Prostate gland (tissue), 2 donors: ENCODE measurements at regions of chr19 and their contacts with region 1.

Region 1: DNA sequence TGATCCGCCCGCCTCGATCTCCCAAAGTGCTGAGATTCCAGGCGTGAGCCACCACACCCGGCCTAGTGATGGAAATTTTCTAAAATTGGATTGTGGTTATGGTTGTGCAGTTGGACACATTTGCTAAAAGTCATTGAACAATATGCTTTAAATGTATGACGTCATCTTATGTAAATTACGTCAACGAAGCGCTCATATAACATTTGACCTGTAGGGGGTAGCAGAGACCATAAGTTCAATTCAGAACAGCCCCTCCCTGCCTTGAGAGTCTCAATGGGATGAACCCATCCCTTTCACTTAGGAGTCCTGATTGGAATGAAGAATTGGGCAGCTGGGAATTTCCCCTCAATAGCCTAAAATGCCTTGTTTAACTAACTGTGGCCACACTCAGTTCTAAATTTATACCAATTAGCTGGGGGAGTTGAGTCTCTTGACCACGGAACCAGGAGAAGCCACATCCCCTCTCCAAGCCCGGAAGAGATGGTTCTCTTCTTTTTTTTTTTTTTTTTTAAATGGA is 15.3 kb upstream of the TLE6 start:
- DNase-seq: peak; percentile 80
- H3K4me3 ChIP-seq: no peak overlapping the region
- H3K27ac ChIP-seq: no peak overlapping the region
- H3K4me1 ChIP-seq: no peaks in the 10 kb centered on the region
- H3K27me3 ChIP-seq: no peaks in the 10 kb centered on the region
- CTCF ChIP-seq: peak; percentile 59 to 98 (median 94)
- POLR2A ChIP-seq: no peak

Region 2: DNA sequence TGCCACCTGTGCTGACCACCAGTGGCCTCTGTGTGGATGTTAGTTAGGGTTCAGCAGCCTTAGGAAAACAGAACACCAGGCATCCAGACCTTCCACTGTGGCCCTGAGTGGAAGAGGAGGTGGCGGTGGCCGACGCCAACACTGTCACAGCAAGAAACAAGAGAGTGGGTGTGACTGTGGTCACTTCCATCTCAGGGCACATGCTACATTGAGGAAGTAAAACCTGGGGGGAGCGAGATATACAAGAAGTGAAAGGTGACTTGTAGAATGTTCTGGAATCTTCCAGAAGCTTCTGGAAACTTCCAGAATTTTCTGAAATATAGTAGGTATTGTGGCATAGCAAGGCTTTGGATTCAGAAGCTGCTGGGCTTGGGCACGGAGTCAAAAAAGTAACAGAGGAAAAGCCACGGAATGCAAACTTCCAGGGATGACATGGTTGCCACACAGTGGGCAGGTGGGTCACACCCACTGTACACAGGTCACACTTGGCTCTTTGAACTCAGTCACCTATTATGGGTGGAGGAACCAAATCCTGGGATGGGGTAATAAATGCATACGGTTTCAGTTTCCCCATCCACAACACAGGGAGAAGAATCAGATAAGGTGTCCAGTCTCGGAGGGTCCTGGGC is 283.9 kb before region 1 on chr19:
- intact Hi-C with region 1: no loop called
- DNase-seq: no peak
- H3K4me3 ChIP-seq: no peak overlapping the region
- H3K27ac ChIP-seq: no peak overlapping the region
- H3K4me1 ChIP-seq: no peaks in the 10 kb centered on the region
- H3K27me3 ChIP-seq: no peaks in the 10 kb centered on the region
- CTCF ChIP-seq: no peak
- POLR2A ChIP-seq: no peak

Region 3: DNA sequence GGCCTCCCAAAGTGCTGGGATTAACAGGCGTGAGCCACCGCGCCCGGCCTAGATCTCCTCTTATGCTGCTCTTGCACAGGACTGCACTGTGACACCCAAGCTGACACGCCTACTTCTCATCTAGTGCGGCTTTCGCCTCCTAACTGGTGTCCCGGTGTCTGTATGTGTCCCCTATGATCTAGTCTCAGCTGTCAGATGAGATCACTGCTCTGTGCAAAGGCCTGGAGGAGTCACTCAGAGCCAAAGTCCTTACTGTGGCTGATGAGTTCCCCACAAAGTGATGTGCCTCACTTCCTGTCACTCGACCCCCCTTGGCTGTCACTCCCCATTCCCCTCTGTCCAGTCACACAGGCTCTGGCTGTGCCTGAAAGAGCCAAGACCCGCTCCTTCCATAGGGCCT is 92.5 kb before region 1 on chr19:
- intact Hi-C with region 1: no loop called
- DNase-seq: no peak
- H3K4me3 ChIP-seq: no peak overlapping the region
- H3K27ac ChIP-seq: no peak overlapping the region
- H3K4me1 ChIP-seq: no peaks in the 10 kb centered on the region
- H3K27me3 ChIP-seq: no peaks in the 10 kb centered on the region
- CTCF ChIP-seq: no peak
- POLR2A ChIP-seq: no peak

Region 4: DNA sequence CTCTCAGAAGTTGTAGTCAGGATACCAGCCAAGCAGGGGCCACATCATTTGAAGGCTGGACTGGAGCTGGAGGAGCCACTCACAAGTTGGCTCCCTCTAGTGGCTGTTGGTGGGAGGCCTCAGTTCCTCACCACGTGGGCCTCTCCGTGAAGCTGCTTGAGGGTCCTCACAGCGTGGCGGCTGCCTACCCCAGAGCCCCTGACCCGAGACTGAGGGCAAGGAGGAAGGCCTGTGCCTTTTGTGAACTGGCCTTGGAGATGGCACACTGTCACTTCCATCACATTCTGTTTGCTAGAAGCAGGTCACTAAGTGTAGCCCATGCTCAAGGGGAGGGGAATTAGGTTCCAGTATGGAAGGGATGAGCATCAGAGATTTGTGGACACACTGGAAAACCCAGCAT is 146.7 kb after region 1 on chr19:
- intact Hi-C with region 1: loop called (anchors 10 kb)
- DNase-seq: peak; percentile 42
- H3K4me3 ChIP-seq: no peak overlapping the region
- H3K27ac ChIP-seq: no peak overlapping the region
- H3K4me1 ChIP-seq: no peaks in the 10 kb centered on the region
- H3K27me3 ChIP-seq: no peaks in the 10 kb centered on the region
- CTCF ChIP-seq: peak; percentile 45 to 76 (median 65)
- POLR2A ChIP-seq: no peak

Region 5: GRCh38 chr19:3163230-3163886 is 201.3 kb after region 1 on chr19:
- intact Hi-C with region 1: loop called (anchors 5 kb)
- DNase-seq: peak; percentile 33
- H3K4me3 ChIP-seq: no peak overlapping the region
- H3K27ac ChIP-seq: no peak overlapping the region
- H3K4me1 ChIP-seq: no peaks in the 10 kb centered on the region
- H3K27me3 ChIP-seq: no peaks in the 10 kb centered on the region
- CTCF ChIP-seq: peak; percentile 81 to 91 (median 89)
- POLR2A ChIP-seq: no peak